Left colon (tissue), 2 donors: ENCODE measurements at regions of chr14 and their contacts with region 1.

Region 1: GRCh38 chr14:52824507-52824906 is 33.1 kb upstream of the GNPNAT1 start:
- DNase-seq: no peak
- ATAC-seq: no peak

Region 2: DNA sequence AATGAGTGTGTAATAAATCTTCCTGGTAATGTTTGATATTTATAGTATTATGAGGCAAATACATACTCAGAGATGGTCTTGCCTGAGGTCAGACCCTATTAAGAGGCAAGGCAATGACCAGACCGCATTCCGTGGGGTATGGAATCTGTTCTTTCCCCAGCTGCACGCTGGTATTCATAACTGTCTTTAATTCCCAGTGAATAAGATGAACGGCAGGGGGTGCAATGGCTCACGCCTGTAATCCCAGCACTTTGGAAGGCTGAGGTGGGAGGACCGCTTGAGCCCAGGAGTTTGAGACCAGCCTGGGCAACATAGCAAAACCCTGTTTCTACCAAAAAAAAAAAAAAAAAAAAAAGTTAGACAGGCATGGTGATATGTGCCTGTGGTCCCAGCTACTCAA is 173.7 kb before region 1 on chr14:
- intact Hi-C with region 1: no loop called
- DNase-seq: peak in 1 of 2 donors; percentile 7
- ATAC-seq: peak; percentile 39

Region 3: DNA sequence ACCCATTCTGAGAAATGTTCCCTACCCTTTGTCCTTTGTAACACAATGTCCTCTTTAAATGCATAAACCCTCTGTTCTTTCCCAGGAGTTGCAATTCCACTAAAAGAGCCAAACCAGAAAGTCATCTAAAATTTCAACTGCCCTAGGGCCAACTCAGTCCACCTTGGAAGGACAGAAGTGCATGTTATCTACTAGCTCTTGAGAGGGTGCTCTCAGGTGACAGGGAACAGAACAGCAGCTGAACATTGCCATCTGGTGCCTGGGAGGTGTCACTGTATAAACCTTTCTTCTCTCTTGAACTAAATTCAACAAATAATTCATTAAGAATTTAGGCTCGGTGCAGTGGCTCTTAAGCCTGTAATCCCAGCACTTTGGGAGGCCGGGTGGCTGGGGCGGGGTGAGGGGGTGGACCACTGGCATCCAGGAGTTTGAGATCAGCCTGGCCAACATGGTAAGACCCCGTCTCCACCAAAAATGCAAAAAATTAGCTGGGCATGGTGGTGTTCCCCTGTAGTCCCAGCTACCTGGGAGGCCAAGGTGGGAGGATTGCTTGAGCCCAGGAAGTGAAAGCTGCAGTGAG is 136.6 kb after region 1 on chr14:
- intact Hi-C with region 1: loop called in 1 of 2 experiments (anchors 5 kb)
- DNase-seq: peak in 1 of 2 donors; percentile 31
- ATAC-seq: peak; percentile 84

Region 4: DNA sequence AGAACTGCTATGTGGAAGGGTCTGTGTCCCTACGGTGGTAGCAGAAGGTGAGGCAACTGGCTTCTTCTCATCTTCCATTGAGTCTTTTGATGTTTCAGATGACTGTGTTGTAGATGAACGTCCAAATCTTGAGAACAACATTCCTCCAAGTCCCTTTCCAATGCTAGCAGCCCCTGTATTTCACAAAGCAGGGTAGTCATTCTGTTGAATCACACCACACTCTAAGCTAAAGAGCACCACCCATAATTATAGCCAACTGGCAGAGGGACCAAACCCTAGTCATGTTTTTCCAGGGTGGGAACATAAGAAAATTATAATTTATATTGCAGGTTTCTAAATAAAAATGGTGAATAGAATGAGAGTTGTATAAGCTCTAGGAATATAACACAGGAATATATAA is 229.9 kb after region 1 on chr14:
- intact Hi-C with region 1: loop called in 1 of 2 experiments (anchors 5 kb)
- DNase-seq: no peak
- ATAC-seq: peak; percentile 55

Region 5: DNA sequence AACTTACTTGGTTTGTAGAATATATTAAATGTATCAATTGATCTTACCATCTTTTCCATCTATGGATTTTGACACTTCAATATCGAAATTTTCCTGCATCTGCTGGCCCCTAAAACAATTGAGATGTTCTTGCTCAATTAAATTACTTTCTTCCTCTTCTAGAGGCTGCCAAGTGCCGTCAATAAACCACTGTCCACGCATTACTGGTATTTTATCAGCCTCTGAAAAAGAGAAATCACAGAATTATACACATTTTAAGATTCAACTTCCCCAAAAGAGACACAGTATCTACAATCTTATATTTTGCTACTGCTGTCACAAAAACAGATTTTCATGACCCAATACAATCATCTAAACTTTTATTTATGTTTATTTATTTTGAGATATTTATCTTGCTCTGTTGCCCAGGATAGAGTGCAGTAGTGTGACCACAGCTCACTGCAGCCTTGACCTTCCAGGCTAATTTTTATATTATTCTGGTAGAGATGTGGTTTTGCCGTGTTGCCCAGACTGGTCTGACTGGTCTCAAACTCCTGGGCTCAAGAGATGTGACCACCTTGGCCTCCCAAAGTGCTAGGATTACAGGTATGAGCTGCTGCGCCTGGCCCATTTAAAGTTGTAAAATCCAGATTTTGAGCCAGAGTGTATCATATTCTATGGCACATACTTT is 279.3 kb after region 1 on chr14:
- intact Hi-C with region 1: no loop called
- DNase-seq: no peak
- ATAC-seq: no peak